ENCODE measurements at regions of chr6 and their contacts with region 1.

Region 1: DNA sequence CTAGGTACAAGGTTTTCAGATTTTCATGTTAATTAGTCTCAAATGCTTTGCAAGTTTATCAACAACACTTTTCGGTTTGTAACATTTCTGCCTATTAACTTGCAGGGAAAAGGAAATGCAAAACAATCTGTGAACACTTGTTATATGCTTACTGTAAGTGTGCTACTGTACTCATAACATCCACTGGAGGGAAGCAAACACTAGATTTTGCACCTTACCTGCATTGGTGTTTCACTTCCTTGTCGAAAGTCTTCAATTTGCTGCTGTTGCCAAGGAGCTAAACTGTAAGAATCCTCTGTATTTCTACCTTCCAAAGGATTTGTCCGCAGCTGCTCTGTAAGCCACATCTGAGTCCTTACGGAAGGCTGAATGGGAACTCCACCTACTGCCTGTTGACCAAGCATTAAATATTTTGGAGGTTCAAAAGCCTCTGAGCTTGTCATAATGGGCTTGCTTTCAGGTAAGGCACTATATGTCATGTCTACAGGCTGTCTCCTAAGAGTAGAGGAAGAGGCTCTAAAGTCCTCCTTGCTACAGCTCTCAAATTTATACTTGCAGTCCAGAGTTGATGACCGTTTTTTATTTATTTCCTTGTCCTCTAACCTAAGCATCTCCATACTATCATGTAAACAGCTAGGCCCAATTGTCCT is 17.3 kb downstream of the PLN start:
- DNase-seq: no peak
- H3K4me3 Mint-ChIP-seq: no peak overlapping the region
- H3K27ac Mint-ChIP-seq: peak overlapping the region; percentile 37
- H3K4me1 Mint-ChIP-seq: peaks cover 9% of the 10 kb centered on the region
- H3K27me3 Mint-ChIP-seq: no peaks in the 10 kb centered on the region

Region 2: GRCh38 chr6:118580585-118581419 is 15.4 kb after region 1 on chr6:
- CTCF ChIA-PET with region 1: interaction called, 14 read pairs
- DNase-seq: peak; percentile 27
- H3K4me3 Mint-ChIP-seq: no peak overlapping the region
- H3K27ac Mint-ChIP-seq: no peak overlapping the region
- H3K4me1 Mint-ChIP-seq: peaks cover 2% of the 10 kb centered on the region
- H3K27me3 Mint-ChIP-seq: no peaks in the 10 kb centered on the region

Region 3: DNA sequence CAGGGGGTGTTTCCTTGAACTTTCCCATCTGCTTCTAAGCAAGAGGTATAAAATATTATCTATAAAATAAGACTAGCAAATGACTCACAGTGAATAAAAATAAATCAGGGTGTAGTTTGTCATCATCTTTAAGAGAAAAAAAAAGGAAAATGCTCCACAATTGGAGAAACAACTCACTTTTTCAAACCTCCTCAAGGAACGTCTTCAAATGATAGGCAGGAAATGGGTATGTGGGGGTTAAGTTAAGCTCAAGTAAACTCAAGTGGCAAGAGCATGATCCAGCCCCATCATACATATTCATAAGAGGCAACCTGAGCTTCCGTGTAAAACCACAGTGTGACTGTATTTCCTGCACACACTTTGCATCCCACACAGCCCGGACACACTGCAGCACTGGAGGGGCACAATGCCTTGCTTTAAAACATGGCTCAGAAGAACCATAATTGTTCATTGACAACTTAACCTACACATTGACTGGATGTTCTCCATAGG is 144.5 kb after region 1 on chr6:
- CTCF ChIA-PET with region 1: interaction called, 13 read pairs
- DNase-seq: peak; percentile 84
- H3K4me3 Mint-ChIP-seq: peak overlapping the region; percentile 96
- H3K27ac Mint-ChIP-seq: peak overlapping the region; percentile 97
- H3K4me1 Mint-ChIP-seq: peaks cover 67% of the 10 kb centered on the region
- H3K27me3 Mint-ChIP-seq: no peaks in the 10 kb centered on the region

Region 4: GRCh38 chr6:118787724-118788423 is 222.4 kb after region 1 on chr6:
- CTCF ChIA-PET with region 1: interaction called, 13 read pairs
- DNase-seq: peak; percentile 30
- H3K4me3 Mint-ChIP-seq: no peak overlapping the region
- H3K27ac Mint-ChIP-seq: peak overlapping the region; percentile 49
- H3K4me1 Mint-ChIP-seq: peaks cover 22% of the 10 kb centered on the region
- H3K27me3 Mint-ChIP-seq: peaks cover 5% of the 10 kb centered on the region

Region 5: GRCh38 chr6:118893807-118894424 is 328.5 kb after region 1 on chr6 and contains the start of gene ASF1A:
- CTCF ChIA-PET with region 1: interaction called, 13 read pairs
- DNase-seq: peak; percentile 98
- H3K4me3 Mint-ChIP-seq: peak within 1 kb of the TSS; percentile 92
- H3K27ac Mint-ChIP-seq: peak within 1 kb of the TSS; percentile 100
- H3K4me1 Mint-ChIP-seq: peaks cover 55% of the 10 kb centered on the region
- H3K27me3 Mint-ChIP-seq: no peaks in the 10 kb centered on the region